Mammary epithelial cell (primary cell): ENCODE measurements at regions of chr10 and their contacts with region 1.

Region 1: DNA sequence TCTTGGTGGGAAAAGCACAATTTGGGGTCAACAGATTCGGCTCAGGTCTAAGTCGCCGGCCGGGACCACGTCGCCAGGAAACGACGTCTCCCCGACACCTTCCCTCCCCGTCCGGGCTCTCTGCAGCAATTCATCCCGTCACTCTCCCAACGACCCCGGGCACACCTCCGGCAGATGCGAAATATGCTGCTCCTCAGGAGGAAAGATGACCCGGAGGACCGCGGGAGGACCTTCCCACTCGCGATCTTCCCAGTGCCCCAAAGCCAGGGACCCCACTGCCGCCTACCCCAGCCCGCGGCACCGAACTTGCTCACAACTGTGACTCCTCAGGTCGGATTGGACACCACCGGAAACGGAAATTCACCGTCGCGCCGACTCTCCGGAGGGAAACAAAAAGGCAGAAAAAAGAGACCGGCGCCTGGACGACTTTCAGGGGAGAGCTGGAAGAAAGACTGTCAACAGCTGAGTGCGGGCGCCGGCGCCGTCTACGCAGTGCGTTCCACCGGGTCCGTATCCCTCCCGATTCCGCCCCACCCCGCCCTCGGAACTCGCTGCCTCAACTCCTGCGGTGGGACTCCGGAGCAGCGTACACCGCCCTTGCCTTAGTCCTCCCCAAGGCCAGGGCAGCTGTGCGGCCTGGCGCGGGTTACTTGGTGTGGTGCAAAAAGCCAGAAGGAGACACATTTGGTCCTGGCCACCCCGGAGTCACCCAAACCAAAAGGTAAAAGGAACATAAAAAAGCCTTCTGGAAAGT is 13.8 kb upstream of the SEC24C start:
- DNase-seq: peak; percentile 95
- H3K4me3 ChIP-seq: peak overlapping the region; percentile 81 to 94 (median 82)
- H3K27ac ChIP-seq: peak overlapping the region; percentile 68
- H3K4me1 ChIP-seq: peaks cover 4% of the 10 kb centered on the region
- H3K27me3 ChIP-seq: no peaks in the 10 kb centered on the region
- CTCF ChIP-seq: no peak

Region 2: DNA sequence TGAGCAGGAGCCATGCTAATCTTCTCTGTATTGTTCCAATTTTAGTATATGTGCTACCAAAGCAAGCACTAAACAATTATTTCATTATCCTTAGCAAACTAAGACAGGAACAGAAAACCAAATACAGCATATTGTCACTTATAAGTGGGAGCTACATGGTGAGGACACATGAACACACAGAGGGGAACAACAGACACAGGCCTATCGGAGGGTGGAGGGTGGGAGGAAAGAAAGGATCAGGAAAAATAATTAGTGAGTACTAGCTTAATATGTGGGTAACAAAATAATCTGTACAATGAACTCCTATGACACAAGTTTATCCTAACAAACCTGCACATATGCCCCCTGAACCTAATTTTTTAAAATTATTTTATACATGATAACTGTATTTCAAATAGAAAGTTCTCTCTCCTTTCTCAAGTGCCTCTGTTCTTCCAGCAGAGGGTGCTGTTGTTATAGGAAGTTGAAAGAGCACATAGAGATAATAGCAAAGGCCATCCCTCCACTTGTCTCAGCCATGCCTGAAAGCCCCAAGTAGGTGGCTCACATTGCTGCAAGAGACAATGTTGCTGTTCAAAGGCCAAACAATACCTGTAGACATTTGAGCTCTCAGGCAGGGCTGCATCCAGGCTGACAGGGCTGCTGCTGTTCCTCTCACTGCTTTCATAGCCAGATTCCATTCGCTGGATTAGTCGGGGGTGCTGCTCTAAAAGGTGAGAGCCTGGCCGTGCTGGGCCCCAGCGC is 201.1 kb before region 1 on chr10:
- CTCF ChIA-PET with region 1: no interaction called
- dilution Hi-C with region 1: no loop called
- in situ Hi-C with region 1: no loop called
- intact Hi-C with region 1: loop called (anchors 1 kb)
- DNase-seq: peak; percentile 53
- H3K4me3 ChIP-seq: no peak overlapping the region
- H3K27ac ChIP-seq: no peak overlapping the region
- H3K4me1 ChIP-seq: no peaks in the 10 kb centered on the region
- H3K27me3 ChIP-seq: no peaks in the 10 kb centered on the region
- CTCF ChIP-seq: peak; percentile 71 to 81

Region 3: GRCh38 chr10:73785221-73785720 is 54.9 kb after region 1 on chr10 and contains the start of gene ZSWIM8:
- CTCF ChIA-PET with region 1: no interaction called
- dilution Hi-C with region 1: no loop called
- in situ Hi-C with region 1: no loop called
- intact Hi-C with region 1: loop called (anchors 2 kb)
- DNase-seq: peak; percentile 93
- H3K4me3 ChIP-seq: peak within 1 kb of the TSS; percentile 73 to 92 (median 83)
- H3K27ac ChIP-seq: peak within 1 kb of the TSS; percentile 46
- H3K4me1 ChIP-seq: peaks cover 20% of the 10 kb centered on the region
- H3K27me3 ChIP-seq: no peaks in the 10 kb centered on the region
- CTCF ChIP-seq: no peak
- total RNA-seq, gene ZSWIM8: 62.5 to 67.6 TPM